ENCODE measurements at regions of chr13 and their contacts with region 1.

Region 1: DNA sequence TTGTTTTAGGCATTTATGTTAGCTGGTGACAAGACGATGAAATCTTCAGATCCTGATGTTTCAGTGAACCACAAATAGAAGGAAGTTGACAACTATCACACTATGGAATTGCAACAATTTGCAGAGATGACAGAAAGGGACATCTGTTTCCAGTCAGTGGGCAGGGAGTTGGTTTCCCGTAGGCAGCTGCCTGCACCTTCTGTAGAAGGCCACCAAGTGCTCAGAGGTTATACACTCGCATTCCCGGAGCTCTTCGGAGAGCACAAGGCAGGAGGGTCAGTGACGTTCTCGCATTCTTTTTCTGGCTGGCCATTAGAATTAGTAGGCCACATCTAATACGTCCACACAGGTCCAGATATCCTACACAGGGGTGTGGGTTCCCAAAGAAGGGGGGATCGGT is 129.4 kb downstream of the SHISA2 start:
- DNase-seq: no peak
- H3K4me3 ChIP-seq: no peak overlapping the region
- H3K27ac ChIP-seq: no peak overlapping the region
- H3K4me1 ChIP-seq: no peaks in the 10 kb centered on the region
- H3K27me3 ChIP-seq: no peaks in the 10 kb centered on the region
- CTCF ChIP-seq: no peak
- EP300 ChIP-seq: no peak
- POLR2A ChIP-seq: no peak

Region 2: GRCh38 chr13:25901460-25902376 is 20.7 kb before region 1 on chr13:
- intact Hi-C with region 1: no loop called
- DNase-seq: no peak
- H3K4me3 ChIP-seq: no peak overlapping the region
- H3K27ac ChIP-seq: no peak overlapping the region
- H3K4me1 ChIP-seq: no peaks in the 10 kb centered on the region
- H3K27me3 ChIP-seq: no peaks in the 10 kb centered on the region
- CTCF ChIP-seq: no peak
- EP300 ChIP-seq: no peak
- POLR2A ChIP-seq: no peak

Region 3: DNA sequence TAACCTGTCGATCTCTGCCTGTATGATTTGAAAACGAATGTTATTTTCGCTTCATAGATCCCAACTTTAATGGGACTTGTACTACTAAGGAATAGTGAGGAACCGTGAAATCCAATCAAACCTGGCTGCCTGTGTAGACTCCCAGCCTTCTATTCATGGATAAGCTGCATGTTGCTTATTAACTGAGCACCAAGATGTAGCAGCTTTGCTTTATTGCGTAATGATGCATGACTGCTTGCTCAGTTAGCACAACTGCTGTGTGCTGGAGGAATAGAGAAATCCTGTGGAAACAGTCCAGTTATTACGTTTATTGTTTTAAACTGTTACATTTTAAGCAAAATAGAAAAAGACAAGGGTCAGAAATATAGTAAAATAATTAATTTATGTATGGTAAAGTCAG is 21.3 kb after region 1 on chr13:
- intact Hi-C with region 1: loop called in 1 of 4 experiments (anchors 2 kb)
- DNase-seq: no peak
- H3K4me3 ChIP-seq: no peak overlapping the region
- H3K27ac ChIP-seq: no peak overlapping the region
- H3K4me1 ChIP-seq: no peaks in the 10 kb centered on the region
- H3K27me3 ChIP-seq: no peaks in the 10 kb centered on the region
- CTCF ChIP-seq: no peak
- EP300 ChIP-seq: no peak
- POLR2A ChIP-seq: no peak

Region 4: GRCh38 chr13:26377038-26377437 is 454.7 kb after region 1 on chr13:
- intact Hi-C with region 1: no loop called
- DNase-seq: no peak
- H3K4me3 ChIP-seq: no peak overlapping the region
- H3K27ac ChIP-seq: no peak overlapping the region
- H3K4me1 ChIP-seq: no peaks in the 10 kb centered on the region
- H3K27me3 ChIP-seq: peaks cover 2% of the 10 kb centered on the region
- CTCF ChIP-seq: no peak
- EP300 ChIP-seq: no peak
- POLR2A ChIP-seq: no peak